ENCODE measurements at regions of chr5 and their contacts with region 1.

Region 1: GRCh38 chr5:115460472-115460871 is 84.1 kb downstream of the FEM1C start:
- DNase-seq: peak; percentile 27 to 66
- ATAC-seq: peak; percentile 73 to 74
- H3K4me3 ChIP-seq: no peak overlapping the region
- H3K27ac ChIP-seq: peak overlapping the region; percentile 77 to 82
- H3K4me1 ChIP-seq: peaks cover 54% of the 10 kb centered on the region
- CTCF ChIP-seq: no peak
- EP300 ChIP-seq: no peak; a peak in 1 of 5 replicates
- POLR2A ChIP-seq: no peak
- RAD21 ChIP-seq: peak in 1 of 2 experiments; percentile 28; a peak in 1 of 5 replicates

Region 2: DNA sequence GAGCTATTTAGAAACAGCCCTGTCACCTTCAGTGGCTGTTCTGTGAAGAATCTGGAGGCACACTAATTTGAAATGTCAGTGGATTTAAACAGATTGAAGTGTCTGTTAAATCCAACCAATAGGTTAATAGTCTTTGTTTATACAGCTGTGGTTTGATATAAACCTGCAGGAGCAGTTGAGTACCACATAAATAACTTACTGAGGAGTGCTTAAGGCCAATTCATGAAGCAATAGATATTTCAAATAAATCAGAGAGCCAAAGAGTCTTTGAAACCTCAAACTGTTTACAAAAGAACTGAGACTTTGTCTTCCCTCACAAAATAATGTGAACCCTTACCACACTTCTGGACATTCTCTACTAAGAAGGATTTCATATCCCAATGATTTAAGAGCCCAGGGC is 27.8 kb before region 1 on chr5:
- CTCF ChIA-PET with region 1: no interaction called
- POLR2A ChIA-PET with region 1: no interaction called
- DNase-seq: no peak
- ATAC-seq: no peak
- H3K4me3 ChIP-seq: no peak overlapping the region
- H3K27ac ChIP-seq: no peak overlapping the region
- H3K4me1 ChIP-seq: peaks cover 20% of the 10 kb centered on the region; the same call in 2 of the 3 replicates
- CTCF ChIP-seq: no peak
- EP300 ChIP-seq: no peak
- POLR2A ChIP-seq: no peak
- RAD21 ChIP-seq: no peak

Region 3: GRCh38 chr5:115507681-115508080 is 47.2 kb after region 1 on chr5:
- CTCF ChIA-PET with region 1: no interaction called
- POLR2A ChIA-PET with region 1: no interaction called
- DNase-seq: no peak
- ATAC-seq: no peak
- H3K4me3 ChIP-seq: no peak overlapping the region
- H3K27ac ChIP-seq: no peak overlapping the region
- H3K4me1 ChIP-seq: no peaks in the 10 kb centered on the region
- CTCF ChIP-seq: no peak
- EP300 ChIP-seq: no peak
- POLR2A ChIP-seq: no peak
- RAD21 ChIP-seq: no peak

Region 4: DNA sequence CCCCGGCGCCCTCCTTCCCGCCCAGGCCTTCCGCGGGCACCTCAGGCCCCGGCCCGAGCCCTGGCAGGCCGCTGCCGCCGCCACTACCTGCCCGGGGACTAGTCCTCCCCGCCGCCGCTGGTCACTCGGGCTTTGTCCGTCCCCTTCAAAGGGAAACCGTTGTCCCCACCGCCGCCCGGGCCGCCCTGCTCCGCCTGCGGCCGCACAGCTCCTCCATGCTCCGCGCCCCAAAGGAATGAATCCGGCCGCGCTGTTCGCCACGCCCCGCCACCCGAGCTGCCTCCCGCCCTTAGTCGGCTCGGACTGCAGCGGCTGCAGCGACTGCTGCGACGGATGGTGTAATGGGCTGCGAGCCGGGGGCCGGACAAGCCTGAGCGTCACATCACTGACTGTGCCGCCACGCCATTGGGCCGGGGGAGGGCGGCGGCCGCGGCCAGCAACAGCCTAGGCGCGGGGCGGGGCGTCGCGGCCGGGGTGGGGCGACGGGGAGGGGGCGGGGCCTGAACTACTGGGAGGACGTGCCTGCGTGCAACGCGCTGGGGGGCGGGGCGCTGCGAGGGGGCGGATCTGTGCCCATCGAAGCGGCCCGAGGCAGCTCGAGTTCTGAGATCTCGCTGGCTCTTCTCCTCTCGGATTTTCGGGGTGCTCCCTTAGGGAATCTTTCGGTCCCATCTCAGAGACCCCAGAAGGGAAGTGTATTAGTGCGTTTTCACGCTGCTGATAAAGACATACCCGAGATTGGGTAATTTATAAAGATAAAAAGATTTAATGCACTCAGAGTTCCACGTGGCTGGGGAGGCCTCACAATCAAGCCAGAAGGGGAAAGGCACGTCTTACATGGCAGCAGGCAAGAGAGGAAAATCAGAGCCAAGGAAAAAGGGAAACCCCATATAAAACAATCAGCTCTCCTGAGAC is 84.2 kb after region 1 on chr5 and contains the start of gene FEM1C:
- CTCF ChIA-PET with region 1: no interaction called
- POLR2A ChIA-PET with region 1: interaction called, 12 read pairs
- DNase-seq: peak; percentile 88 to 97
- ATAC-seq: peak; percentile 98 to 99
- H3K4me3 ChIP-seq: peak within 1 kb of the TSS; percentile 82
- H3K27ac ChIP-seq: peak within 1 kb of the TSS; percentile 94 to 96
- H3K4me1 ChIP-seq: peaks cover 30% of the 10 kb centered on the region; the same call in 2 of the 3 replicates
- CTCF ChIP-seq: no peak
- EP300 ChIP-seq: no peak
- POLR2A ChIP-seq: peak; percentile 91
- RAD21 ChIP-seq: no peak
- polyA plus RNA-seq, gene FEM1C: 7.9 and 8.4 TPM in 2 replicates

Region 5: DNA sequence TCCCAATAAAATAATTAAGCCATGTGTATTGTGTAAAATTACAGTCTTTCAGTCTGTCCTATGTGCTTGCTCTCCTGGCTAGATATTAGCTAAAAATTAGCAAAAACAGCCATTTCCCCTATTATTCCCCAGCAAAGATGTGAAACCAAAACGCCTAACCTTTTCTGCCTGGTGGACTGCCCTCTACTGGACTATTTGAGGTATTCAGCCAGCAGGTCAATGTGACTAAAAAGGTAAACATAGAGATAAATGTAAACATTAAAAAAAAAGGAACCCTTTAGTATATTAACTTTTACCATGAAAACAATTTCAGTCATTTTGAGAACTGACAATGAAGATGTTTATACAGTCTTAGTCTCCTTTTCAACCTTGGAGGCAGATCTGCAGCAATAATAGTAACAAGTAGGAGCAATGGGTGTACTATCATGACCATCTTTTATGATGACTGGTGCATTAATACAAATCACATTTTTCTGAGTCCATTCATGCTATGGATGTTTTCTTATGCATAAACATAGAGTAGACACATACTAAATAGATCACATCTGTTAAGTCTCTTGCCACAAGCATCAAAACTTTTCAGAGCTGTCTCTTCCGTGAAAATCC is 370.8 kb after region 1 on chr5:
- CTCF ChIA-PET with region 1: no interaction called
- POLR2A ChIA-PET with region 1: interaction called, 11 read pairs
- DNase-seq: peak; percentile 44 to 50
- ATAC-seq: peak; percentile 71 to 86; a peak in 5 of 6 replicates
- H3K4me3 ChIP-seq: no peak overlapping the region
- H3K27ac ChIP-seq: no peak overlapping the region
- H3K4me1 ChIP-seq: 0 out of 3 replicates have a peak, but pooled peaks cover 2% of the 10 kb centered on the region
- CTCF ChIP-seq: peak; percentile 78
- EP300 ChIP-seq: no peak
- POLR2A ChIP-seq: no peak
- RAD21 ChIP-seq: peak; percentile 42 to 48; a peak in 3 of 5 replicates

Measured in A549 (cell line).